CD4-positive, alpha-beta T cell (primary cell): ENCODE measurements at regions of chr1 and their contacts with region 1.

Region 1: DNA sequence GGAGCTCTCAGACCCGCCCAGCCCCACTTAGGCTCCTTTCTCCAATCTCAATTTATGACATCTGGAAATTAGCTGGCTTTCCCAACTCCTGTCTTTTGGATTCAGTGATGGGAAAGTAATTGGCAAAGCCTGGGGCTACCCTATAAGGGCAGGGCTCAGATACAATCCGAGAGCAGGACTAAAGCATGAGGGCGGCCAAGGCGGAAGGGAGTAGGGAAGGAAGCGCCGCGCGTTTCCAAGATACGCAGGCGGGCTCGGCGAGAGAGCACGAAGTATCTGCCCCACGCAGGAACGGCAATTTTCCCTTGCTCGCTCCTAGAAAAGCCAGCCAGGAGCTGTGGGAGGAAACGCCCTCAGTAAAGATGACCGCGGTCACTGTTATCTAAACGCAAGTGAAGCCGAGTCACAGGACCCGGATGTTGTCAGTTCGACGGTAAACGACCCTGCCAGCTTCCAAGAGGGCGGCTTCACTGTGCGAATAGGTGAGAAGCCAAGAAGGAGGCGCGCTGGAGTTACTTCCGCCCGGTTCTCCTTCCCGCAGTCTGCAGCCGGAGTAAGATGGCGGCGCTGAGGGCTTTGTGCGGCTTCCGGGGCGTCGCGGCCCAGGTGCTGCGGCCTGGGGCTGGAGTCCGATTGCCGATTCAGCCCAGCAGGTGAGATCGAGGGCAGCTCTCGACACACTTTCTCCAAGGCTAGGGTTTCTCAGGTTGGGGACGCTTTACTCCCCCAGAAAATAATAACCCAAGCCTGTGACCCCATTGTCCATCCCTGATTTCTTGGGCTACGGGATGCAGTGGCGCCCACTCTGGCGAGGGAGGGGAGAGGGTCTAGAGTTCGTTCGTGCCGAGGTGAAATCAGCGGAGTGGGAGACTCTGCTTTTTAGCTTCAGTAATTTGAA is at the start of gene NDUFS2:
- DNase-seq: peak; percentile 90 to 99 (median 94)
- ATAC-seq: peak; percentile 99
- H3K4me3 ChIP-seq: peak within 1 kb of the TSS; percentile 66
- H3K4me3 Mint-ChIP-seq: peak within 1 kb of the TSS; percentile 99
- H3K27ac ChIP-seq: peak within 1 kb of the TSS; percentile 85 to 86
- H3K27ac Mint-ChIP-seq: peak within 1 kb of the TSS; percentile 95
- H3K4me1 ChIP-seq: peaks cover 47% of the 10 kb centered on the region
- H3K4me1 Mint-ChIP-seq: peaks cover 66% of the 10 kb centered on the region
- H3K27me3 ChIP-seq: no peaks in the 10 kb centered on the region
- H3K27me3 Mint-ChIP-seq: no peaks in the 10 kb centered on the region
- CTCF ChIP-seq: no peak
- total RNA-seq, gene NDUFS2: 49.9 to 55.7 TPM

Region 2: DNA sequence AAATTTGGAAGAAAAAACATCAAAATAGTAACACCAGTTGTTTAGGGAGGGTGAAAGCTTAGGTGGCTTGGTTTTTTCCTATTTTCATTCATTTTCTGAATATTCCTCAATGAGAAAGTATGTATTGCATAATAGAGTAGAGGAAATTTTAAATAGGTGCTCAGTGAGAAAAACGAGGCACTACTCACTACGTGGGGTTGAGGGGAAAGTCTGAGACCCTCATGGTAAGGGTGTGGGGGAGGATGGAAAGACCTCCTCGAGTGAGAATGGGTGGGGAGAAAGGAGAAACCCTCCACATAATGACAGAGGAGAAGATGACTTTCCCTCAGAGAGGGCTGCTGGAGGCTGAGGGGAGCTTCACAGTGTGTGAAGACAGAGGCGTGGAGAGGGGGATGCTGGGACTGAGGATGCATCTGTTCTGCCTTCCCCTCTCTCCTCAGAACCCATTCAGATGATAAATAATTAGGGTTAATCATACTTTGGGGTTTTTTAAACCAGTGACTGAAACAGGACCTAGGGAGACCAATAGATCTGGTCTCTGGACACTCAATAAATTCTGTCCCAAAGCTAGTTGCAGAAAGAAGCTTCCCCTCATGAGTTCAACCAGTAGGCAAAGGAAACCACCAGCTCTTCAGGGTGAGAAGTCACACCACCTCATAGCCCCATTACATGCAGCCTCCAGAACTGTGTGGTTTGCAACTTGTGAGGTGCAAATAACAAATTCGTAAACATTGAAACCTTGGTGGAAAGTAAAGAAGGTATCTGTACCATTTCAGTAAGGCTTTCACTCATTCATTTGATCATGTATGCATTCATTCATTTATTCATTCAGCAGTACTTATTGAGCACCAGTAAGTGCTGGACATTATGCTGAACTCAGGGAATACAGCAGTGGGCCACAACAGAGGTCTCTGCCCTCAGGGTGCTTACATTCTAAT is 445.9 kb before region 1 on chr1:
- CTCF ChIA-PET with region 1: no interaction called
- POLR2A ChIA-PET with region 1: no interaction called
- intact Hi-C with region 1: no loop called
- DNase-seq: peak in 3 of 14 experiments; percentile 56 to 82 (median 59)
- ATAC-seq: peak; percentile 26
- H3K4me3 ChIP-seq: no peak overlapping the region
- H3K4me3 Mint-ChIP-seq: no peak overlapping the region
- H3K27ac ChIP-seq: no peak overlapping the region
- H3K27ac Mint-ChIP-seq: no peak overlapping the region
- H3K4me1 ChIP-seq: peaks cover 17% of the 10 kb centered on the region
- H3K4me1 Mint-ChIP-seq: peaks cover 4% of the 10 kb centered on the region
- H3K27me3 ChIP-seq: no peaks in the 10 kb centered on the region
- H3K27me3 Mint-ChIP-seq: no peaks in the 10 kb centered on the region
- CTCF ChIP-seq: no peak

Region 3: DNA sequence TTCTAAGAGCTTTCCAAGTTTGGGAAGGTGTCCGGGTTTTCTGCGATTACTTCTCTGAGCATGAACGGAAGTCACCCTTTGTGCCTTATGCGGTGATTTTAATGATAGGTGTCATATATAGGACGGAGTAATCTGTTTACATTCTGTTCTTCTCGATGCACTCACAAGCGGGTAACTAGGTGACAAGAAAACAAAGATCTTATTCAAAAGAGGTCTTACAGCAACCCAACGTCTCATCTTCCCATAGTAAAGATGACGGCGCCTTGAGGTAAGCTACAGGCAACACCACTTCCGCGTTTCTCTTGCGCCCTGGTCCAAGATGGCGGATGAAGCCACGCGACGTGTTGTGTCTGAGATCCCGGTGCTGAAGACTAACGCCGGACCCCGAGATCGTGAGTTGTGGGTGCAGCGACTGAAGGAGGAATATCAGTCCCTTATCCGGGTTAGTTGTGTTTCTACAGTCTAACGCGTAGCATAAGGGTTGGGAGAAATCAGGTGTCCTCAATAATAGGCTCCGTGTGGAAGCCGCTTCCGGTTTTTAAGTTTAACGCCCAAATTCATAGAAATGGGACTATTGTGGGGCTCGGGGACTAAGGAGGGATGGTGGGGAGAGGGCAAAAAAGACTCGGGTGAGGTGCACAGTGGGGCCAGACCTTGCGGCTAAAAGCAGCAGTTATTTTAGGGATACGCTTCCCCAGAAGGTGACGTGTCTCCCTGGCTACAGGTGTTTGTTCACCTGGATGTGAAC is 48.2 kb before region 1 on chr1 and contains the start of gene UFC1:
- CTCF ChIA-PET with region 1: interaction called, 12 read pairs
- POLR2A ChIA-PET with region 1: interaction called, 17 read pairs
- intact Hi-C with region 1: no loop called
- DNase-seq: peak; percentile 67 to 96 (median 76)
- ATAC-seq: peak; percentile 91
- H3K4me3 ChIP-seq: peak within 1 kb of the TSS; percentile 97
- H3K4me3 Mint-ChIP-seq: peak within 1 kb of the TSS; percentile 98
- H3K27ac ChIP-seq: peak within 1 kb of the TSS; percentile 96 to 99
- H3K27ac Mint-ChIP-seq: peak within 1 kb of the TSS; percentile 99
- H3K4me1 ChIP-seq: peaks cover 19% of the 10 kb centered on the region
- H3K4me1 Mint-ChIP-seq: peaks cover 42% of the 10 kb centered on the region
- H3K27me3 ChIP-seq: no peaks in the 10 kb centered on the region
- H3K27me3 Mint-ChIP-seq: no peaks in the 10 kb centered on the region
- CTCF ChIP-seq: no peak
- total RNA-seq, gene UFC1: 96.6 to 97.8 TPM

Region 4: DNA sequence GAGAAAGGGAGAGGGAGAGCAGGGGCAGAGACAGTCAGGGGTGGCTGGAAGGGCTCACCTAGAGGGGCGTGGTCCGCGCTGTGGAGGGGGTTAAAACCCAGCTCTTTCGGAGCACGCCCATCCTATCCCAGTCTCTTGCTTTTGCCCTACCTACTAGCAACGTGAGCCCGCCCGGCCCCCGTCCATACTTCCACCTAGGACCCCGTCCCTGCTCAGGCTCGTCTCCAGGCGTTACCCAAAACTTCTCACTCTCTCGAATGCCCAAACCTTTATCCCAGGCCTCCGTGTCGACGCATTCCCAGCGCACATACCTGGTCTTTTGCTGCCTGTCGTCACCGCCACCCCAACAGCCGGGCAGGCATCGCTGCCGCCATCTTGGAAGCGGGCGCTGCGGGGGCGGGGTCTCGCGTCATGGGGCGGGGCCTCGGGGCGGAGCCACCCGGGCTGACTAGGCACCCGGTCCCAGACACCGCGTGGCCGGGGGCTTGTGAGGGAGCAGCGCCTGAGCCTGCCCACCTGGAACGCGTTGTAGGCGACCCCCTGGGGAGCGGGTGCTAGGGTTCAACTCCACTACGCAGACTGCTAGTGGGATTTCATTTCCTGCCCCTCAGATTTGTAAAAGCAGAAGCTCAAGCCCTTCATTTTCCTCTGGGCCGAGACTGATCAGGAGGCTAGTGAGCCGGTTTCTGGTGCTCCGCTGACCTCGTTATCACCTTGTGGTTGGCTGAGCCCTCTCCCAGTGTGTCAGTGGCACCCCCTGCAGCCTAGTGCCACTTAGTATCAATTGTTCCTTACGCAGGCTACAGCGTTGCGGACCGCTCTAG is 24.8 kb before region 1 on chr1 and contains the start of gene B4GALT3:
- CTCF ChIA-PET with region 1: interaction called, 5 read pairs
- POLR2A ChIA-PET with region 1: interaction called, 67 read pairs
- intact Hi-C with region 1: no loop called
- DNase-seq: peak; percentile 84 to 98 (median 93)
- ATAC-seq: peak; percentile 90
- H3K4me3 ChIP-seq: peak within 1 kb of the TSS; percentile 77
- H3K4me3 Mint-ChIP-seq: peak within 1 kb of the TSS; percentile 100
- H3K27ac ChIP-seq: peak within 1 kb of the TSS; percentile 82 to 89
- H3K27ac Mint-ChIP-seq: peak within 1 kb of the TSS; percentile 97
- H3K4me1 ChIP-seq: peaks cover 76% of the 10 kb centered on the region
- H3K4me1 Mint-ChIP-seq: peaks cover 72% of the 10 kb centered on the region
- H3K27me3 ChIP-seq: no peaks in the 10 kb centered on the region
- H3K27me3 Mint-ChIP-seq: no peaks in the 10 kb centered on the region
- CTCF ChIP-seq: no peak
- total RNA-seq, gene B4GALT3: 40.8 to 44.3 TPM

Region 5: GRCh38 chr1:161216945-161217712 is 15.1 kb after region 1 on chr1:
- CTCF ChIA-PET with region 1: interaction called, 3 read pairs
- POLR2A ChIA-PET with region 1: interaction called, 22 read pairs
- intact Hi-C with region 1: no loop called
- DNase-seq: peak in 3 of 14 experiments; percentile 29 to 71 (median 60)
- ATAC-seq: no peak
- H3K4me3 ChIP-seq: peak overlapping the region; percentile 40
- H3K4me3 Mint-ChIP-seq: no peak overlapping the region
- H3K27ac ChIP-seq: peak overlapping the region; percentile 26 to 50
- H3K27ac Mint-ChIP-seq: peak overlapping the region; percentile 91
- H3K4me1 ChIP-seq: peaks cover 42% of the 10 kb centered on the region
- H3K4me1 Mint-ChIP-seq: peaks cover 49% of the 10 kb centered on the region
- H3K27me3 ChIP-seq: no peaks in the 10 kb centered on the region
- H3K27me3 Mint-ChIP-seq: no peaks in the 10 kb centered on the region
- CTCF ChIP-seq: no peak

Region 6: DNA sequence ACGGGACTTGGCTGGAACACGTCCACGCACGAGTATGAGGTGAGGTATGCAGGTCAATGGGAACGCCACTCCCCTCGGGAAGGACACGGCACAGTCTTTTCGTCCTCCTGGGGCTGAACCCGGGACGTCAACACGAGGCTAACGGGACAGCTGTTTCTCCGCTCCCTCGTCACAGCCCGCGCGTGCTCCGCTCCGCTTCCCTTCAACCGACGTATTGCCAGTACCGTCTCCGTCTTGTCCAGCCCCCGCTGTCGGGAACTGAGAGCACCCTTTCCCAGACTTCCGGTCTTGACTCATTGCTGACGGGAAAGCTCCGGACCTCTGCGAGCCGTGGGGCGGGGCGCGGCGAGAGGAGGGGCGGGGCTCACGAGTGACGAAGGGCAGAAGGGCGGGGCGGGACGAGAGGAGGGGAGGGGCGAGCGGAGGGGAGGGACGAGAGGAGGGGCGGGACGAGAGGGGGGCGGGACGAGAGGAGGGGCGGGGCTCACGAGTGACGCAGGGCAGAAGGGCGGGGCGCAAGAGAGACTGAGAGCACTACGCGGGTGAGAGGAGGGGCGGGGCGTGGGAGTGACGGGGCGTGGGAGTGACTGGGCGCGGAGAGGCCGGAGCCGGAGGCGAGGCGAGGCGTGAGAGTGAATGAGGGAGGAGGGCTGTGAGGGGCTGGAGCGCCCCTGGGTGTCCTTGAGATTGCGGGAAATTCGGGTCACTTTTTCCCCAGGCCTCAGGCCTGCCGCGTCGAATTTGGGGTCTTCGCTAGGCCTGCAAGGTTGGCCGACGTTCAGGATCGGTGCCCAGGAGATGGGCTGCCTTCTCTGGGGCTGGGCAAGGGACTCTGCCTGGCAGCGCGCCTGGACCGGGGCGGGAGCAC is 187.8 kb after region 1 on chr1:
- CTCF ChIA-PET with region 1: no interaction called
- POLR2A ChIA-PET with region 1: interaction called, 20 read pairs
- intact Hi-C with region 1: loop called in 1 of 2 experiments (anchors 2 kb)
- DNase-seq: peak; percentile 90 to 98 (median 96)
- ATAC-seq: peak; percentile 86
- H3K4me3 ChIP-seq: peak overlapping the region; percentile 92
- H3K4me3 Mint-ChIP-seq: peak overlapping the region; percentile 92
- H3K27ac ChIP-seq: peak overlapping the region; percentile 70 to 90
- H3K27ac Mint-ChIP-seq: peak overlapping the region; percentile 97
- H3K4me1 ChIP-seq: peaks cover 25% of the 10 kb centered on the region
- H3K4me1 Mint-ChIP-seq: peaks cover 45% of the 10 kb centered on the region
- H3K27me3 ChIP-seq: no peaks in the 10 kb centered on the region
- H3K27me3 Mint-ChIP-seq: no peaks in the 10 kb centered on the region
- CTCF ChIP-seq: no peak